CD4-positive, alpha-beta memory T cell (primary cell): ENCODE measurements at regions of chr1 and their contacts with region 1.

Region 1: GRCh38 chr1:206803221-206803730 is 31.0 kb upstream of the IL10 start:
- DNase-seq: peak; percentile 91 to 96 (median 94)
- H3K4me3 ChIP-seq: peak overlapping the region in 1 of 2 donors; percentile 6
- H3K4me3 Mint-ChIP-seq: peak overlapping the region; percentile 4 to 74 (median 56)
- H3K27ac ChIP-seq: peak overlapping the region; percentile 67
- H3K27ac Mint-ChIP-seq: peak overlapping the region; percentile 89 to 99 (median 97)
- H3K4me1 ChIP-seq: peaks cover 60% of the 10 kb centered on the region
- H3K4me1 Mint-ChIP-seq: peaks cover 45 to 83% (median 66%) of the 10 kb centered on the region in 4 donors
- H3K27me3 ChIP-seq: no peaks in the 10 kb centered on the region
- H3K27me3 Mint-ChIP-seq: no peaks in the 10 kb centered on the region

Region 2: GRCh38 chr1:206761159-206761768 is 42.0 kb before region 1 on chr1:
- CTCF ChIA-PET with region 1: interaction called, 14 read pairs
- POLR2A ChIA-PET with region 1: interaction called, 141 read pairs
- intact Hi-C with region 1: loop called (anchors 1 kb)
- DNase-seq: no peak
- H3K4me3 ChIP-seq: no peak overlapping the region
- H3K4me3 Mint-ChIP-seq: peak overlapping the region in 1 of 8 donors; percentile 17
- H3K27ac ChIP-seq: no peak overlapping the region
- H3K27ac Mint-ChIP-seq: peak overlapping the region in 2 of 7 donors; percentile 51 to 82
- H3K4me1 ChIP-seq: peaks cover 63% of the 10 kb centered on the region
- H3K4me1 Mint-ChIP-seq: peaks cover 21 to 36% (median 31%) of the 10 kb centered on the region in 4 donors
- H3K27me3 ChIP-seq: no peaks in the 10 kb centered on the region
- H3K27me3 Mint-ChIP-seq: no peaks in the 10 kb centered on the region

Region 3: DNA sequence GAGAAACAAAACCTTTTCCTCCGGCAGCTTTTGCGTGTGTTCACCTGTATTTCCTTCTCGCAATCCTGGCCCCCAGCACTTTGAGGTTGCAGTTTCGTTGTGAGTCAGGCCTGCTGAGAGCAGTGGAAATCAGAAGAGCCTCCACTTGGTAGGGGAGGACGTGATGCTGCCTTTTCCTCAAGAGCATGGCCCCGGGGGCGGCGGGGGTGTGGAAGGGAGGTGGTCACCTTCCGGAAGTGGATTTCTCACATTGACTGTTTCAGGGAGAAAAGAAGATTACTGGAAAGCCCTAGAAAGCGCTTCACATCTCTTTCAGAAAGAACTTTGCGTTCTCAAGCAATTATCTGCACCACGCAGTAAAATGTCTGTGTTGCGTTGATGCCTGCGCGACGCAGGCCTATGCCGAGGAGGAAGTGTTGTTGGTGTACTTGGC is 18.8 kb before region 1 on chr1:
- CTCF ChIA-PET with region 1: interaction called, 25 read pairs
- POLR2A ChIA-PET with region 1: interaction called, 46 read pairs
- intact Hi-C with region 1: loop called (anchors 1 kb)
- DNase-seq: peak; percentile 60 to 83 (median 63)
- H3K4me3 ChIP-seq: peak overlapping the region in 1 of 2 donors; percentile 16
- H3K4me3 Mint-ChIP-seq: peak overlapping the region; percentile 55 to 84 (median 70)
- H3K27ac ChIP-seq: peak overlapping the region; percentile 46
- H3K27ac Mint-ChIP-seq: peak overlapping the region; percentile 83 to 96 (median 93)
- H3K4me1 ChIP-seq: peaks cover 37% of the 10 kb centered on the region
- H3K4me1 Mint-ChIP-seq: peaks cover 37 to 60% (median 49%) of the 10 kb centered on the region in 4 donors
- H3K27me3 ChIP-seq: no peaks in the 10 kb centered on the region
- H3K27me3 Mint-ChIP-seq: no peaks in the 10 kb centered on the region

Region 4: GRCh38 chr1:206816390-206817287 is 13.4 kb after region 1 on chr1:
- CTCF ChIA-PET with region 1: interaction called, 24 read pairs
- POLR2A ChIA-PET with region 1: interaction called, 25 read pairs
- intact Hi-C with region 1: loop called (anchors 1 kb)
- DNase-seq: peak; percentile 53 to 75 (median 68)
- H3K4me3 ChIP-seq: no peak overlapping the region
- H3K4me3 Mint-ChIP-seq: peak overlapping the region; percentile 7 to 67 (median 55)
- H3K27ac ChIP-seq: peak overlapping the region; percentile 40
- H3K27ac Mint-ChIP-seq: peak overlapping the region; percentile 74 to 92 (median 88)
- H3K4me1 ChIP-seq: peaks cover 19% of the 10 kb centered on the region
- H3K4me1 Mint-ChIP-seq: peaks cover 17 to 19% (median 19%) of the 10 kb centered on the region in 4 donors
- H3K27me3 ChIP-seq: no peaks in the 10 kb centered on the region
- H3K27me3 Mint-ChIP-seq: no peaks in the 10 kb centered on the region